ENCODE measurements at regions of chr19 and their contacts with region 1.

Region 1: GRCh38 chr19:21396893-21397572 is at the start of gene ZNF493:
- DNase-seq: peak; percentile 85 to 98 (median 94)
- H3K4me3 ChIP-seq: peak within 1 kb of the TSS; percentile 54 to 99 (median 85)
- H3K27ac ChIP-seq: peak within 1 kb of the TSS in 55 of 59 donors; percentile 10 to 92 (median 78)
- H3K27me3 ChIP-seq: no peaks in the 10 kb centered on the region
- CTCF ChIP-seq: peak in 9 of 56 donors; percentile 6 to 37 (median 13)
- total RNA-seq, gene ZNF493: 47.5 to 105 (median 71.6) TPM

Region 2: GRCh38 chr19:21233691-21234090 is 163.3 kb before region 1 on chr19:
- intact Hi-C with region 1: no loop called
- DNase-seq: no peak
- H3K4me3 ChIP-seq: no peak overlapping the region
- H3K27ac ChIP-seq: no peak overlapping the region
- H3K27me3 ChIP-seq: no peaks in the 10 kb centered on the region
- CTCF ChIP-seq: no peak

Region 3: DNA sequence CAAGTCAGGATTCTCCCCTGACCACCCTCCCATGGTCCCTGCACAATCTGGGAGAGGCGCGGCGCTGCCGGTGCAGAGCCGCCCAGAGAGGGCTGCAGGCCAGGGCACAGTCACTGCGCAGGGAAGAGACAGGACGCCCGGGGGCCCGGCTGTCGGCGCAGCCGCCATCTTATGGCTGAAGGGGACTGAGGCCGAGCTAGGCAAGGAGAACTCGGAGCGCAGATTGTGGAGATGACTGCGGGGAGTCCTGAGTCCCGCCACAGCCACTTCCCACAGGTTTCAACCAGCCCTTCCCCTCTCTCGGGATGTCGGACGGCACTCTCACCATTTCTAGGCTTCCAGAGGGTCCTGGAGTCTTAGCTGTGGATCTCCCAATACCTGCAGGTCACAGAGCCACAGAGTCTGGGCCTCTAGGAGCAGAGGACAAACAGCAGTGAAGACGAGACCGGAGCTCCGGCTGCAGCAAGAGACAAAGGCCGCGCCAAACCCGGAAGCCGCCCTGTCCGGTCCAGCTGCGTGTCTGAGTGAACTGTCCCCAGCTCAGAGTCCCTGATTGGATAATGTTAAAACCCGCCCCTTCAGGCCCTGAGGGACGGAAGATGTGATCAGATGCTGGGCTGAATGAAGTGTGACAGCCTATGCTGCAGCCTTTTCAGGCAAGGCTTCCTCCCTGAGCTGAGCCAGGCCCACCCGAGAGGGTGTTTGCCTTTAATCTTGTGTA is 68.0 kb before region 1 on chr19 and contains the start of gene ZNF708:
- intact Hi-C with region 1: loop called in 1 of 2 experiments (anchors 2 kb)
- DNase-seq: peak; percentile 84 to 97 (median 94)
- H3K4me3 ChIP-seq: peak within 1 kb of the TSS; percentile 62 to 95 (median 84)
- H3K27ac ChIP-seq: peak within 1 kb of the TSS; percentile 84 to 99 (median 96)
- H3K27me3 ChIP-seq: no peaks in the 10 kb centered on the region
- CTCF ChIP-seq: peak in 14 of 56 donors; percentile 6 to 36 (median 18)
- total RNA-seq, gene ZNF708: 19.1 to 168 (median 46.2) TPM

Region 4: DNA sequence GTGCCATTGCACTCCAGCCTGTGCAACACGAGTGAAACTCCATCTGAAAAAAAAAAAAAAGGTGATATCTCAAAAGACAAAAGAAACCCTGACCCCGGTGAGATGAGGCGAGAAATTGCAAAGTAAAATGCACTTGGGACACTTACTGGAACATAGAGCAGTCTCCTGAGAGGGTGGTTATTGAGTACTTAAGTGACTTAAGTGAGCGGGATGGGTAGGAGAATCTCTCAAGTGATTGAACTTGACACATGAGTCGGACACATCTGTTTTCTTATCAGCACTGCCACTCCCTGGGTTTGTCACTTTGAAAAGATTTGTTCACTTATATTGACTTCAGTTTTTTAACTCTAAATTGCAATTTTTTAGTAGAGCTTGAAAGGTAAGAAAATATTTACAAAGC is 111.2 kb after region 1 on chr19:
- intact Hi-C with region 1: no loop called
- DNase-seq: no peak
- H3K4me3 ChIP-seq: peak overlapping the region in 1 of 59 donors; percentile 9
- H3K27ac ChIP-seq: no peak overlapping the region
- H3K27me3 ChIP-seq: no peaks in the 10 kb centered on the region
- CTCF ChIP-seq: no peak

Region 5: DNA sequence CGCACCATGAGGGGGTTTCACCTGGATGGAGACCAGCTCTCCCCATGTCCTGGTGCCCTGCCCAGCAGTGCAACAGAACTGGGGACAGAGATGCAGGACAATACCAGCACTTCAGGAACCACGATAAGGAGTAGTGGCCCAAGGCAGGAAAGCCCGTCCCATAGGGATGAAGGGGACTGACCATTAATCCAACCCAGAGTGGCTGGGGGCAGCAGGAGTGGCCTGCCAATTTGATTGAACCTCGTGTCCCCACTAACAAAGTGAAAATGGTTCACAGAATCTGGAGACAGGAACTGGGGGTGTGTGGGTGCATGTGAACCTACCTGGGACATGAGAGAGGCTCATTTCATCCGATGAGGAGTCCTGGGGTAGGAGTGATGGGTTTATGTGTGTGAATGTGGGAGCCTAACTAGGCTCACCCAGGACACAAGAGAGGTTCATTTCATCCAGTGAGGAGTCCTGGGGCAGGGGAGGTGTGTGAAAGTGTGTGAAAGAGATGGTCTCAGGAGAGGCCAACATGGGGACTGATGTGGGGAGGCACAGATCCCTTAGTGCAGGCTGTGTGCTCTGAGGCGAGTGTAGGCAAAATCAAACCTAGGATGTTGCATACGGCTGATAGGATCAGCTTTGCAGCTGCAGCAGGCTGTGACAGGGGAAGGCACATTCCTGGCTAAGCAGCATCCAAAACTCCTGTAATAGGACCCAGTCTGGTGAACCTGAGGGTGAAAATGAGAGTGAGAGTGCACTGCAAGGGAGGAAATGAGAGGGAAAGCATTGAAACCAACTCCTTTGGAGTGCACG is 206.6 kb after region 1 on chr19:
- intact Hi-C with region 1: no loop called
- DNase-seq: no peak
- H3K4me3 ChIP-seq: peak overlapping the region; percentile 12 to 73 (median 56)
- H3K27ac ChIP-seq: peak overlapping the region in 5 of 59 donors; percentile 12 to 70 (median 46)
- H3K27me3 ChIP-seq: no peaks in the 10 kb centered on the region
- CTCF ChIP-seq: no peak

Measured in dorsolateral prefrontal cortex (tissue), 120 donors.